T-cell (primary cell): ENCODE measurements at regions of chr14 and their contacts with region 1.

Region 1: DNA sequence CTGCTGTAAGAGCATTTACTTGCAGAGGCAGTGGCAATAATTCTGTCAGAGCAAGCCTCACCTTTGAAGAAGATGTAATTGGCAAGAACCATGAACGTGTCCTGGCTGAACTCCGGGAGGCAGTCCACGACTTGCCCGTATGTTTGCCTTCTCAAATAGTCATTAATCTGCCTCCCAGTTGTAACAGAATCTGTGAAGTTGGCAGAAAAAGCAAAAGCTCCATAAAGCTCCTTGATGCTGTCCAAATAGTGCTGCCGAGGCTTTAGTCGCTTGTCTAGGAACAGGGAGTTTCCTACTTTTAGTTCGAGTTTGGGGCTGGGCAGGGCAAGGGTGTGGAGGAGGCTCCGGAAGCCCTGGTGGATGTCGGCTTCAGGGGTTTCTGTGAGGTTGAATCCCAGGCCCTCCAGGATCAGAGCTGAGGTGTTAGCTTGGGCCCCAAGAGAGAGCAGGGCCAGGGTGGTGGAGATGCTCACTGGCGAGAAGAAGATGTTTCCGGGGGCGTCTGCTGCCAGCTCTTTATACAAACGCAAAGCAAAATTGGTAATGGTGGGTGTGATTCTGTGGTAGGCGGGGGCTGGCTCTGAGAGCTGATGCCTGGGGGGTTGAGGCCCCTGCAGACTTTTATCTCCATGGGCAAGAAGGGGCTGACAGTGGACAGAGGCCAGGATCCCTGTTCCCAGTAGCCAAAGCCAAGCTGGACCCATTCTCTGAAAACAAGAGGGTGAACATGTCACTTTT is 4.4 kb downstream of the SERPINA11 start:
- DNase-seq: no peak
- ATAC-seq: no peak
- H3K4me3 ChIP-seq: no peak overlapping the region
- H3K4me3 Mint-ChIP-seq: no peak overlapping the region
- H3K27ac ChIP-seq: no peak overlapping the region
- H3K27ac Mint-ChIP-seq: no peak overlapping the region
- H3K4me1 ChIP-seq: no peaks in the 10 kb centered on the region
- H3K4me1 Mint-ChIP-seq: no peaks in the 10 kb centered on the region
- H3K27me3 ChIP-seq: peaks cover 0 to 11% of the 10 kb centered on the region in 2 experiments
- H3K27me3 Mint-ChIP-seq: peaks cover 3 to 8% of the 10 kb centered on the region in 2 donors

Region 2: DNA sequence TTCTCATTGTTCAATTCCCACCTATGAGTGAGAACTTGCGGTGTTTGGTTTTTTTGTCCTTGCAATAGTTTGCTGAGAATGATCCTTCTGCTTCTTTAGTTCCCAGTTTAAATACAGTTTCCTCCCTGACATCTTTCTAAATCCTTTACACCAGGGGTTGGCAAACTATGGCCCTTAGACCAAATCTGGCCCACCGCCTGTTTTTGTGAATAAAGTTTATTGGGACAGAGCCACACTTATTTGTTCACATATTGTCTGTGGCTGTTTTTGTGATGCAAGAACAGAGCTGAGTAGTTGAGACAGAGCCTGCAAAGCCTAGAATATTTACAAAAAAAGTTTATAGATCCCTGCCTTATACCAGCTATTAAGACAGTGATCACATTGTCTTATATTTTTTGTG is 208.8 kb before region 1 on chr14:
- CTCF ChIA-PET with region 1: no interaction called
- POLR2A ChIA-PET with region 1: interaction called in 1 of 2 experiments, 12 read pairs
- DNase-seq: no peak
- ATAC-seq: no peak
- H3K4me3 ChIP-seq: no peak overlapping the region
- H3K4me3 Mint-ChIP-seq: no peak overlapping the region
- H3K27ac ChIP-seq: no peak overlapping the region
- H3K27ac Mint-ChIP-seq: no peak overlapping the region
- H3K4me1 ChIP-seq: no peaks in the 10 kb centered on the region
- H3K4me1 Mint-ChIP-seq: no peaks in the 10 kb centered on the region
- H3K27me3 ChIP-seq: no peaks in the 10 kb centered on the region
- H3K27me3 Mint-ChIP-seq: peaks cover 0 to 11% of the 10 kb centered on the region in 2 donors